Ovary (tissue), 10 donors: ENCODE measurements at regions of chr2 and their contacts with region 1.

Region 1: GRCh38 chr2:47256416-47257087 is 101.4 kb upstream of the STPG4 start:
- DNase-seq: no peak
- H3K4me3 ChIP-seq: no peak overlapping the region
- H3K27ac ChIP-seq: no peak overlapping the region
- H3K4me1 ChIP-seq: no peaks in the 10 kb centered on the region
- H3K27me3 ChIP-seq: no peaks in the 10 kb centered on the region
- CTCF ChIP-seq: no peak
- EP300 ChIP-seq: no peak
- POLR2A ChIP-seq: no peak

Region 2: DNA sequence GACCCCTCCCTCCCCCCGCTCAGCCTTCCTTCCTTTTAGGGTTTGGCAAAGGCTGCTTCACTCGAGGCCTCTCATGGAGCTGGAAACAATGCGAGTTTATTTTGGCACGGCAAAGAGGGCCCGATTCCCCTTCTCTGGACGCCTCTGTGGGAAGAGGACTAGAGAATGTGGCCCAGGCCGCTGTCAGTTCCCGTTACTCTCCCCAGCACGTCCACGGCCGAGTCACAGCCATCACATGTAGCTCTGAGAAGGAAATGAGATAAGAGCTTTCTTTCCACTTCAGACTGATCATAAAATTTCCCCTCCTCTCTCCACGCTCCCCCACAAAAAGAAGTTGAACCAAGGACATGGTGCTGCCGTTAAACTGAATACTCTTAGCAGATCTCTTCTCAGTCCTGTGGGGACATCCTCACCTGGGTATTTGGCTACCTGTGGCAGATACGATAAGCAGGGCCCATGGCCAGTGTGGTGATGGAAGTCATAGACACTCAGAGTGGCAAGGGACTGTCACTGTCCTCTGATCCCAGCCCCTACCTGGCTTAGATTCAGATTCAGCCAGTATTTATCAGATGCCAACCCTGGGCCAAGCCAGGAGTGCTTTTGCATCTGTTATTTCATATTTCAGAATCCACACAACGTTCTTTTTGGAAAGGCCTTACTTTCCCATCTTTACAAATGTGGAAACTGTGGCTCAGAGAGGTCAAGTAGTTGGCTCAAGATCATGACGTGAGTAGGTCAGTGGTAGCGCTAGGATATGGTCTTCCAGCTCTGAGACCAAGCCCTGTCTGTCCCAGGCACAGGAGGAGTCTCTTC is 442.2 kb before region 1 on chr2:
- intact Hi-C with region 1: no loop called
- DNase-seq: peak; percentile 66 to 83 (median 75)
- H3K4me3 ChIP-seq: no peak overlapping the region
- H3K27ac ChIP-seq: peak overlapping the region; percentile 15 to 79
- H3K4me1 ChIP-seq: peaks cover 23% of the 10 kb centered on the region
- H3K27me3 ChIP-seq: no peaks in the 10 kb centered on the region
- CTCF ChIP-seq: no peak
- EP300 ChIP-seq: peak; percentile 36
- POLR2A ChIP-seq: no peak

Region 3: DNA sequence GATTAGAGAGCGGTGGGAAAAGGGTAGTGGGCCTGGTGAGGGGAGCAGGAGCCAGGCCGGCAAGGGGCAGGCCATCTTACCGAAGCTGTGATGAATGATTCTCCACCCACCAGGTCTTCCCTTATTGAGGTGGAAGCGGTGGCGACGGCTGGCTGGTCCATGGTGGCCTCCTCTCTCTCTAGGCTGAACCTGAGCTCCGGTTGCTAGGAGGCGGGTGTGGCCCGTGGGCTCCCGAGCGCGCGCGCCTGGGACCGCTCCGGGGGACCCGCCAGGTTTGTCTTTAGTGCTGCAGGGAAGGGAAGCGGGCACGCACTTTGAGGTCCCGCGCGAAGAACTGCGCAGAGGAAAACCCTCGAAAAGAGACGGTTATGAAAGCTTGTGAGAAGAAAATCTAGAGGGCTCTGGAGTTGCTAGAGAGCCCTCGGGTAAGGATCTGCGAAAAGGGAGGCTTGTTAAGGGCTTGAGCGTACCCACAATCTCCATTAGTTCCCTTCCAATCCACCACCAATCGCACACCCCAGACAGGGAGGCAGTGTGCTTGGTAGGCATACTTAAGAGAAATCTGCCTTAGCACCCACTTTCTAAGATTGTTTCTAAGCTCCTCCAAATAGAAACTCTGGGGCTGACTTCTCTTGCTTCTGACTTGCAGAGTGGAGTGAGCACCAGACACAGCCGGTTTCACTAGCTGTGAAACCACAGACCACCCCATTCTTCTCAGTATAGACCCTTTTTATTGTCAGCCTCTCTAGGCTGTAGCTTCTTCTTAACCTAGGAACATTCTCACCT is 101.3 kb before region 1 on chr2 and contains the start of gene STPG4:
- intact Hi-C with region 1: no loop called
- DNase-seq: no peak
- H3K4me3 ChIP-seq: no peak within 1 kb of the TSS
- H3K27ac ChIP-seq: no peak within 1 kb of the TSS
- H3K4me1 ChIP-seq: no peaks in the 10 kb centered on the region
- H3K27me3 ChIP-seq: no peaks in the 10 kb centered on the region
- CTCF ChIP-seq: no peak
- EP300 ChIP-seq: no peak
- POLR2A ChIP-seq: no peak
- total RNA-seq, gene STPG4: 0.35 TPM in 1 of 7 donors, not detected in the others

Region 4: DNA sequence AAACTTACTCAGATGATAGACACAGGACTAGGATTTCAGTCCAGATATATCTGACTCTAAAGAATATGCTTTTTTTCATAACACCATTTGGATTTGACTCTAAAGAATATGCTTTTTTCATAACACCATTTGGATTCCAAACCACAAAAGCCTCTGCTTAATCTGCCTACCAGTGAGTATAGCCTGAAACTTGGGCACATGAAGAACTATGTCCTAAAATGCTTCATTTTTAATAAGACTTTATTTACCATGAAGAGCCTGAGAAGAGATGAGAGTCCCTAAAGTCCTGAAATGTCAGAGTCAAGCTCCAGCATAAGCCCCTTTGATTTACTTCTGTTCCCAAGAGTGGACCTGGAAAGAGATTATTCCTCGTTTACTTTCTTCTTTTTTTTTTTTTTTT is 46.9 kb before region 1 on chr2:
- intact Hi-C with region 1: loop called in 1 of 4 experiments (anchors 1 kb)
- DNase-seq: no peak
- H3K4me3 ChIP-seq: no peak overlapping the region
- H3K27ac ChIP-seq: no peak overlapping the region
- H3K4me1 ChIP-seq: peaks cover 4% of the 10 kb centered on the region
- H3K27me3 ChIP-seq: no peaks in the 10 kb centered on the region
- CTCF ChIP-seq: no peak
- EP300 ChIP-seq: no peak
- POLR2A ChIP-seq: no peak